Activated CD4-positive, alpha-beta memory T cell treated with anti-CD3 and anti-CD28 coated beads for 36 hours (primary cell): ENCODE measurements at regions of chr7 and their contacts with region 1.

Region 1: DNA sequence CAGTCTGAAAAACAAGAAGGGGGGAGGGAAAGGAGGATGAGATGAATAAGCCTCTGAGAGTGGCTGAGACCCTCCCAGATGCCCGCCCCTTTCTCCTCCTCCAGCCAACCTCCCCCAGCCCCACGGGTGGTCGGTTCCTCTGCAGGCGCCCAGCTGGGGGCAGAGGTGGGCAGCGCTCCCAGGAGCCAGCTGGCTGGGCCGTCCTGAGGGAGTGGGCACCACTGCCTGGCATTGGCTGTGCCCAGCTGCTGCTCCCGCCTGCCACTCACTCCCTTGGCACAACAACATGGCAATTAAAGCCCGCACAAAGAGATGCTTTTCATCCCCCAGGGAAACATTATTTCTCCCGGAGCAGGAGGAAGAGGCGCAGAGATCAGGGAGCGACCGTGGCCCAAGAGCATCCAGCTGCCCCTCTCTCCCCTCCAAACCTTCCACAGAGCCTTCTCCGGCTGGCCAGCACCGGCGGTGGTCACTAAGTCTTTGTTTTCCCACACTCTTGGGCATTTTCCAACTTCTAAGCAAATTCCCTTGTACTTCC is 107.2 kb downstream of the SPDYE5 start:
- DNase-seq: no peak
- H3K4me3 Mint-ChIP-seq: no peak overlapping the region
- H3K27ac Mint-ChIP-seq: no peak overlapping the region
- H3K4me1 Mint-ChIP-seq: peaks cover 21% of the 10 kb centered on the region
- H3K27me3 Mint-ChIP-seq: no peaks in the 10 kb centered on the region

Region 2: DNA sequence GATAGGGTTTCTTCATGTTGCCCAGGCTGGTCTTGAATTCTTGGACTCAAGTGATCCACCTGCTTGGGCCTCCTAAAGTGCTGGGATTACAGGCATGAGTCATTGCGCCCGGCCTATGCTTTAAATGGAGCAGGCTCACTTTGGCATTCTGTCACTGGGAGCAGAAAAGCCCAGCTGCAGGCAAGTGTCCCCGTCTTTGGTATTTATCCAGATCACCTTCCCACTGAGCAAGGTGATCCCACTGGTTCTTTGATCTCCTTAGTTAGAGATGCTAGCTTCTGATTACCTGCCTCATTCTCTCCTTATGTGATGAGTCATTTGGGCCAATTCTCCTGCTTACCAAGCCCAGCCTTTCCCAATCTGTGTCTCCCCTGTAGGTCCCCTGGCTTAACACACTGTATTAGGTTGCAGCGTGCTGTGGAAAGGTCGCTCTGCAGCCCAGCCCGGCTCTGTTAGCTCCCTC is 67.9 kb before region 1 on chr7:
- CTCF ChIA-PET with region 1: no interaction called
- POLR2A ChIA-PET with region 1: no interaction called
- intact Hi-C with region 1: loop called (anchors 2 kb)
- DNase-seq: no peak
- H3K4me3 Mint-ChIP-seq: no peak overlapping the region
- H3K27ac Mint-ChIP-seq: no peak overlapping the region
- H3K4me1 Mint-ChIP-seq: peaks cover 18% of the 10 kb centered on the region
- H3K27me3 Mint-ChIP-seq: no peaks in the 10 kb centered on the region

Region 3: GRCh38 chr7:75565132-75565837 is 34.0 kb before region 1 on chr7:
- CTCF ChIA-PET with region 1: no interaction called
- POLR2A ChIA-PET with region 1: no interaction called
- intact Hi-C with region 1: no loop called
- DNase-seq: no peak
- H3K4me3 Mint-ChIP-seq: no peak overlapping the region
- H3K27ac Mint-ChIP-seq: no peak overlapping the region
- H3K4me1 Mint-ChIP-seq: no peaks in the 10 kb centered on the region
- H3K27me3 Mint-ChIP-seq: no peaks in the 10 kb centered on the region

Region 4: DNA sequence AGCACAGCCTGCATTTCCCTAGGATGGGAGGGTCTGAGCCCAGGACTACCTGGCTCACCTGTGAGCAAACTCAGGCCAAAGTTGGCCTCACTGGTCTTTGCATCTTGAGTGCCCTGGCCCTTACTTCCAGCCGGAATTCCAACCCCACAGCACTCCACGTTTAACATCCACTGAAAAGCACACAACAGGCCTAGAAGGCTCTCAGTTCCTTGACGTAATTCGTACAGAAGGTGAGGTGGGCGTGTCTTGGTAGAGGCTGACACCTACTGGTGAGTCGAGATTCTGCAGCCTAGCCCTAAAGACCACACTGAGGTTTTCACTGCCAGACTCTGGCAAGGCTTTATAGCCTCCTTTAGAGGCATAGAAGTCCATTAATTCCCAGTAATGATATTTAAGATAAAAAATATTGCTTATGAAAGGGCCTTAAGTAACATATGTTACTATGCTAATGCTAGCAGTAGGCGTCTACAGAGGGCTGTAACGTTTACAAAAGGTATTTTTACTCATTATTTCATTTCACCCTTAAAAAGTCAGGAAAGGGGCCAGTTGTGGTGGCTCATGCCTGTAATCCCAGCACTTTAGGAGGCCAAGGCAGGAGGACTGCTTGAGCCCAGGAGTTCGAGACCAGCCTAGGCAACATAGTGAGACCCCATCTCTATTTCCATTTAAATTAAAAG is 43.6 kb after region 1 on chr7:
- CTCF ChIA-PET with region 1: no interaction called
- POLR2A ChIA-PET with region 1: no interaction called
- intact Hi-C with region 1: loop called (anchors 5 kb)
- DNase-seq: peak; percentile 83
- H3K4me3 Mint-ChIP-seq: no peak overlapping the region
- H3K27ac Mint-ChIP-seq: no peak overlapping the region
- H3K4me1 Mint-ChIP-seq: peaks cover 9% of the 10 kb centered on the region
- H3K27me3 Mint-ChIP-seq: peaks cover 2% of the 10 kb centered on the region

Region 5: DNA sequence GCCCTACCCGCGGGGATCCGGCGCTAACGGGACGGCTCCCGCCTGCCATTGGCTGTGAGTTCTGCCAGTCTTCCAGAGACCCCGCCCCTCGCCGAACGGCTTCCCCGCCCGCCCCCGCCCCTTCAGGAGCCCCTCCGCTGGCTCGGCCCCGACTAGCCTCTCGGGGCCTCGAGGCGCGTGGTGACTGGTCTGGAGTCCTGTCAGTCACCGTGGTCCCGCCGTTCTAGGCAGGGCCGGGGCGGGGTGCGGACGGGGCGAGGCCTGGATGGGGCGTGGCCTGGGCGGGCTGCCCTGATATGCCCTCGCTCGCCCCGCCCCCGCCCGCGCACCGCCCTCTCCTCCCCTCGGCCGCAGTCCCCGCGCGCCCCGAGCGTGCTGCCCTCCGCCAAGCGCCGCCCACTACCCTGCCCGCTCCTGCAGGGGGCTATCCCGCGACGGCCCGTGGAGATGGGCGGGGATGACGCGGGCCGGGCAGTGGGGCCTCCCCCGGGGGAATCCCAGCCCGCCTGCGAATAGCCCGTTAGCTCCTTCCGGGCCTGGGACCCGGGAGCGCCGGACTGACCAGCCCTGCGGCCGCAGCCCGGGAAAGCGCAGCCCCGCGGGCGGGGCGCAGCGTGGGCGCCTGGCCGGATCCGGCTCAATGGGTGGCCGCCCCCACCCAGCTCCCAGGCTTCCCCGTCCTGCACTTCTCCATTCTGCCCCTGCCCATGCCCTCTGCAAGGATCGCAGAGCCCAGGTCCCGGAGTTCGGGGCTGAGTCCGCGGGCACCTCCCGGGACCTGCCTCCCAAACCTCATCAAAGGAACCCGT is 139.9 kb after region 1 on chr7:
- CTCF ChIA-PET with region 1: no interaction called
- POLR2A ChIA-PET with region 1: no interaction called
- intact Hi-C with region 1: loop called (anchors 5 kb)
- DNase-seq: peak; percentile 99
- H3K4me3 Mint-ChIP-seq: peak overlapping the region; percentile 90
- H3K27ac Mint-ChIP-seq: peak overlapping the region; percentile 85
- H3K4me1 Mint-ChIP-seq: peaks cover 17% of the 10 kb centered on the region
- H3K27me3 Mint-ChIP-seq: peaks cover 4% of the 10 kb centered on the region

Region 6: GRCh38 chr7:75776295-75776971 is 177.1 kb after region 1 on chr7:
- CTCF ChIA-PET with region 1: no interaction called
- POLR2A ChIA-PET with region 1: no interaction called
- intact Hi-C with region 1: loop called (anchors 2 kb)
- DNase-seq: peak; percentile 78
- H3K4me3 Mint-ChIP-seq: peak overlapping the region; percentile 49
- H3K27ac Mint-ChIP-seq: peak overlapping the region; percentile 80
- H3K4me1 Mint-ChIP-seq: peaks cover 50% of the 10 kb centered on the region
- H3K27me3 Mint-ChIP-seq: peaks cover 12% of the 10 kb centered on the region

Region 7: DNA sequence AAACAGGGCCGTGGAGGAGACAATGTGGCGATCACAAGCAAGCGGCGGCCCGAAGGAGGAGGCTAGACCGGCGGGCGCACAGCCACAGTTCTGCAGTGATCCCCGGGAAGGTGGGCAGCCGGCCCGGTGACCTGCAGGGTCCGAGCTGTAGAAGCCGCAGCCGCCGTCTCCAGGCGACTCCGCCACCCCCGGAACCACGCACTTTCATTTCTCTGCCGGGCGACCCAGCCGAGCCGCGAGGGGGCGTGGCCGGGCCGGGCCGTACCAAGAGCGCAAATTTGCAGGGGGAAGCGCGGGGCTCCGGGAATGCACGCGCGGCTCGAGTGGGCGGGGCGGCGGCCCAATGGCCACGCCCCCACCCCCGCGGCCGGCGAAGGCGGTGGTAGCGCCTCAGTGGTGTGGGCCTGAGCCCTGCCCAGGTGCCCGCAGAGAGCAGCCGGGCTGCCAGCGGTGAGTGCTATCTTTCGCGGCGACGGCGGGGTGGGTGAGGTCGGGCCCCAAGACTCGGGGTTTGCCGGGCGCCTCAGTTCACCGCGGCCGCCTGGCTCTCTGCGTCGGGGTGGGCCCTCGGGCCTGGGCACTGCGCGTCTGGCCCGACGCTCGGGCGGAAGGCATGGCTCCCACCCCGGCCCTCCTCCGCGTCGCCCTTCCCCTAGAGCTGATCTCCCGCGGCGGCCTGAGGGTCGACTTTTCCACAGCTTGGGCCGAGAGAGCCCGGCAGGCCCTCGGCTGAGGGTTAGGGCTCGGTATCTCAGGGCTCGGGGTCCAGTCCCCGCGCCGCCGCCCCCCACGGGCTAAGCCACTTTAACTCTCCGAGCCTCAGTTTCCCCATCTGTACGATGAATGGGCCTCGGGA is 315.6 kb after region 1 on chr7 and contains the start of gene POR:
- CTCF ChIA-PET with region 1: no interaction called
- POLR2A ChIA-PET with region 1: no interaction called
- intact Hi-C with region 1: no loop called
- DNase-seq: peak; percentile 97
- H3K4me3 Mint-ChIP-seq: peak within 1 kb of the TSS; percentile 82
- H3K27ac Mint-ChIP-seq: peak within 1 kb of the TSS; percentile 87
- H3K4me1 Mint-ChIP-seq: peaks cover 27% of the 10 kb centered on the region
- H3K27me3 Mint-ChIP-seq: no peaks in the 10 kb centered on the region
- total RNA-seq, gene POR: 28.9 to 35.2 TPM

Region 8: DNA sequence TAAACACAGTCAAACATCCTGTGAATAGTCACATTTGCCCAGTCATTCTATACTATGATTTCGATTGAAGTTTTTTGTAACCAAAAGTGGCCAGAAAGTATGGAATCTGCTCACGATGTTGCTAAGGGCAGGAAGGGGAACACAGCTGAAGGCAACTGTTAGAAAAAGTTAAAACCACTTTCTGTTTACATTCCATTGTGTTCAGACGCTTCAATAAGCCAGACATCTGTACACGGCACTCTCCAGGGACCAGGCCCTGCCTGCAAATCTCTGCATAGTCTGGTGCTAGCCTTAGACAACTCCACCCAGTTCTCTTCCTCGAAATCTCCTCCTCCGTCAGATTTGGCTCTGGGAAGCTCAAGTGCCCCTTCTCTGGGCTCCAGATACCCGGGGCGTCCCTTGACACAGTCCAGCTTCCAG is 412.1 kb after region 1 on chr7:
- CTCF ChIA-PET with region 1: no interaction called
- POLR2A ChIA-PET with region 1: no interaction called
- intact Hi-C with region 1: loop called (anchors 5 kb)
- DNase-seq: no peak
- H3K4me3 Mint-ChIP-seq: no peak overlapping the region
- H3K27ac Mint-ChIP-seq: no peak overlapping the region
- H3K4me1 Mint-ChIP-seq: peaks cover 34% of the 10 kb centered on the region
- H3K27me3 Mint-ChIP-seq: no peaks in the 10 kb centered on the region